ENCODE measurements at regions of chr1 and their contacts with region 1.

Region 1: DNA sequence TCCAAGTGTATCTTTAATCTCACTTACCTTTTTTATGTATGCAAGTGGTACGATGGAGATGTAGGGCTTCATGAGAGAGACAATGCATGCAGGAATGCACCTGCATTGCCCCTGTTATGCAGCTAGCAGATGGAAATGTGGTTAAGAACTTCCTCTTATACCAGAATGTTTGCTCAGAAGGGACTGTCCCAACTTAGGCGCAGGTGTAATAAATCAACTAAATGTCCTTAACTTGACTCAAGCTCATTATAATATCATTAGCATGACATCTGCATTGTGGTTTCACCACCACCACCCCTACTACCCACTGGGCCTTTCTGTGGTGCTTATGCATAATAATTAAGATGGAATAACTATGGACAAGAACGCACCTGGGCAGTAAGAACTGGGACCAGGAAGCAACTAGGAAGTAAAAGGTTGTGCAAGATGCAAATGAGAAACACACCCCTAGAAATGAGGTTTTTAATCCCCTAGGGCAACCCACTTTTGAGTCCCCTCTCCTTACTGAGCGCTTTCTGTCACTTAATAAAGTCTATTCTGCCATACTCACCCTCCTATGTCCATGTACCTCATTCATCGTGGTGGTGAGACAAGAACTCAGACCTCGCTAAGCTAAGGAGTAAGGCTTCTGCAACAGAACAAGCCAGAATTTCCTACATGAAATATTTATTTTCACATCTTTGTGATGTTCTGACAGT is 1103.3 kb upstream of the B3GALT2 start:
- DNase-seq: peak; percentile 91
- ATAC-seq: peak; percentile 93
- H3K4me3 ChIP-seq: peak overlapping the region in 1 of 5 experiments; percentile 8
- H3K4me3 Mint-ChIP-seq: peak overlapping the region; percentile 27
- H3K27ac ChIP-seq: no peak overlapping the region
- H3K27ac Mint-ChIP-seq: peak overlapping the region; percentile 78
- H3K4me1 ChIP-seq: peaks cover 10% of the 10 kb centered on the region in 2 donors
- H3K4me1 Mint-ChIP-seq: peaks cover 20% of the 10 kb centered on the region
- H3K27me3 ChIP-seq: peaks cover 0 to 9% (median 2%) of the 10 kb centered on the region in 4 experiments
- H3K27me3 Mint-ChIP-seq: peaks cover 3% of the 10 kb centered on the region
- CTCF ChIP-seq: no peak

Region 2: DNA sequence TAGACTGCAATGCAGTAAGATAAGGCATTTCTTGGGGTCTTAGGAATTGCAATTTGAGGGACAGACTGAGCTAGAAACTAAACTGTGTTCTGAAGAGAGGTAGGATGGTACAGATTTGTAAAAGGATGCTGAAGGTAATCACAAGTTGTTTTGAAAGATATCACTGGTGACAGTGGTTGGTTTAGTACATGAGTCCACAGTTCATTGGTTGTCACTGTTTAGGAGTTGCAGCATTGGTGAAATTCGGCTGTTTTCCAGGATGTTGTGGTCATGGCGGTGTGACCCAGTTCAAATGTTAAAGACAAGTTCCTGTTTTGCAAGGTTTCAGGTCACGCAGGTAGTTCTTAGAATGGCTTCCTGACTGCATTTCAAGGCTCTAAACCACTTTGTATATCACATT is 810.5 kb before region 1 on chr1:
- CTCF ChIA-PET with region 1: interaction called, 3 read pairs
- POLR2A ChIA-PET with region 1: no interaction called
- intact Hi-C with region 1: loop called (anchors 1 kb)
- DNase-seq: peak; percentile 89
- ATAC-seq: peak; percentile 95
- H3K4me3 ChIP-seq: peak overlapping the region in 2 of 5 experiments; percentile 1 to 4
- H3K4me3 Mint-ChIP-seq: peak overlapping the region; percentile 71
- H3K27ac ChIP-seq: peak overlapping the region; percentile 59 to 68
- H3K27ac Mint-ChIP-seq: peak overlapping the region; percentile 84
- H3K4me1 ChIP-seq: peaks cover 15 to 39% of the 10 kb centered on the region in 2 donors
- H3K4me1 Mint-ChIP-seq: peaks cover 36% of the 10 kb centered on the region
- H3K27me3 ChIP-seq: no peaks in the 10 kb centered on the region
- H3K27me3 Mint-ChIP-seq: no peaks in the 10 kb centered on the region
- CTCF ChIP-seq: no peak

Region 3: DNA sequence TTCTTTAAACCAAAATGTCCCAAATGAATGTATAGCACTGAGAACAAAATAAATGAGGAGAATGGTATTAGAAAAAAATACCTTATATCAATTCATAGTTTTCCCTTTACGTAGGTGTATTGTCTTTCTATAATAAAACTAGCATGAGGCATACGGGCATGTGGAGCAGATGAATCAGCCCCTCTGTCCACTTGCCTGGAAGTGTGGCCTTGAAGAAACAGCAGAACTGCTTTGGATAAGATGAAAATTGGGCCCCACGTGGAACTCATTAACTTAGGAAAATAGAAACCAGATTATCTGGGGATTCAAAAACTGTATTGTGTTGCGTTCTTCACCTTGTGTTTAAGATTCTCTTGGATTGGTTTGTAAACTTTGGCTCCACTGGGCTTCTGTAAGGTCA is 746.5 kb before region 1 on chr1:
- CTCF ChIA-PET with region 1: no interaction called
- POLR2A ChIA-PET with region 1: no interaction called
- intact Hi-C with region 1: no loop called
- DNase-seq: no peak
- ATAC-seq: no peak
- H3K4me3 ChIP-seq: no peak overlapping the region
- H3K4me3 Mint-ChIP-seq: no peak overlapping the region
- H3K27ac ChIP-seq: no peak overlapping the region
- H3K27ac Mint-ChIP-seq: no peak overlapping the region
- H3K4me1 ChIP-seq: peaks cover 20 to 27% of the 10 kb centered on the region in 2 donors
- H3K4me1 Mint-ChIP-seq: peaks cover 28% of the 10 kb centered on the region
- H3K27me3 ChIP-seq: no peaks in the 10 kb centered on the region
- H3K27me3 Mint-ChIP-seq: no peaks in the 10 kb centered on the region
- CTCF ChIP-seq: no peak

Region 4: GRCh38 chr1:194052514-194053333 is 237.0 kb before region 1 on chr1:
- CTCF ChIA-PET with region 1: no interaction called
- POLR2A ChIA-PET with region 1: no interaction called
- intact Hi-C with region 1: no loop called
- DNase-seq: no peak
- ATAC-seq: no peak
- H3K4me3 ChIP-seq: no peak overlapping the region
- H3K4me3 Mint-ChIP-seq: no peak overlapping the region
- H3K27ac ChIP-seq: no peak overlapping the region
- H3K27ac Mint-ChIP-seq: no peak overlapping the region
- H3K4me1 ChIP-seq: no peaks in the 10 kb centered on the region
- H3K4me1 Mint-ChIP-seq: no peaks in the 10 kb centered on the region
- H3K27me3 ChIP-seq: no peaks in the 10 kb centered on the region
- H3K27me3 Mint-ChIP-seq: no peaks in the 10 kb centered on the region
- CTCF ChIP-seq: no peak

Region 5: DNA sequence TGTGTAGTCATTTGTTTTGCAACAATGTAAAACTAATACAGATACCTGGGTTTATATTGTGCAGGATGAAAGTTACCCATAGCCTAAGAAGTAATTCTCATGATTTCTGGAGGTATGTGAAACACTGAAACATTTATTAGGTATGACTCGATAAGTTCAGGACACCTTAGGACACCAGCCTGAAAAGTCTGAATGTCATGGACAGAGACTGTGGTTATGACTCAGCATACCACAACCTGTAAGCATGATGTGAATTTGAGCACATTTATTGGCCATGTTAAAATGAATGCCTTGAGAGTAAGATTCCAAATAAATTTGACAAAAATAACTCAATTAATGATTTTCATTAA is 368.3 kb after region 1 on chr1:
- CTCF ChIA-PET with region 1: no interaction called
- POLR2A ChIA-PET with region 1: no interaction called
- intact Hi-C with region 1: no loop called
- DNase-seq: no peak
- ATAC-seq: no peak
- H3K4me3 ChIP-seq: no peak overlapping the region
- H3K4me3 Mint-ChIP-seq: no peak overlapping the region
- H3K27ac ChIP-seq: no peak overlapping the region
- H3K27ac Mint-ChIP-seq: no peak overlapping the region
- H3K4me1 ChIP-seq: no peaks in the 10 kb centered on the region
- H3K4me1 Mint-ChIP-seq: no peaks in the 10 kb centered on the region
- H3K27me3 ChIP-seq: no peaks in the 10 kb centered on the region
- H3K27me3 Mint-ChIP-seq: no peaks in the 10 kb centered on the region
- CTCF ChIP-seq: no peak

Measured in B cell (primary cell).